ENCODE measurements at regions of chr6 and their contacts with region 1.

Region 1: GRCh38 chr6:52162940-52163908 is 23.0 kb upstream of the IL17A start:
- DNase-seq: no peak
- H3K4me3 ChIP-seq: no peak overlapping the region
- H3K27ac ChIP-seq: no peak overlapping the region
- H3K4me1 ChIP-seq: no peaks in the 10 kb centered on the region
- H3K27me3 ChIP-seq: no peaks in the 10 kb centered on the region
- CTCF ChIP-seq: peak; percentile 14 to 29 (median 15)
- POLR2A ChIP-seq: no peak

Region 2: DNA sequence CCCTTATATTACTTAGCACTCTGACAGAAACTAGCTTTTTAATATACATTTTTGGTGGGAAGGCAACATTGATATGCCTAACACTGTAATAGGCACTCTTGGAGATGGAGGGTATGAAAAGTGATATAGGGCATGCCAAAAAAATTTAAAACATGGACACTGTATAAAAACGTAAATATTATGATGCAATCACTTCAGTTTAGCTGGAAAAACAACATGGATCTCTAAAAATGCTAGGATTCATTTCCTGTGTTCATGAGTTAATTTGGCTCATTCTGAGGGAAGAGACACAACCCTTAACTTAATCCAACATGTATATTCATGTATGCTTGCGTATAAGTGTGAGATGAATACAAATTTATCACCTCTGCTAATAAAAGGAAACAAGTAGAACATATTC is 1607.2 kb before region 1 on chr6:
- intact Hi-C with region 1: loop called (anchors 5 kb)
- DNase-seq: no peak
- H3K4me3 ChIP-seq: no peak overlapping the region
- H3K27ac ChIP-seq: no peak overlapping the region
- H3K4me1 ChIP-seq: no peaks in the 10 kb centered on the region
- H3K27me3 ChIP-seq: no peaks in the 10 kb centered on the region
- CTCF ChIP-seq: no peak
- POLR2A ChIP-seq: no peak

Region 3: GRCh38 chr6:50819466-50819903 is 1343.7 kb before region 1 on chr6:
- intact Hi-C with region 1: no loop called
- DNase-seq: no peak
- H3K4me3 ChIP-seq: peak overlapping the region; percentile 19 to 78 (median 63)
- H3K27ac ChIP-seq: peak overlapping the region; percentile 97 to 98
- H3K4me1 ChIP-seq: no peaks in the 10 kb centered on the region
- H3K27me3 ChIP-seq: peaks cover 2 to 25% of the 10 kb centered on the region in 2 donors
- CTCF ChIP-seq: no peak
- POLR2A ChIP-seq: no peak